ENCODE measurements at regions of chr11 and their contacts with region 1.

Region 1: DNA sequence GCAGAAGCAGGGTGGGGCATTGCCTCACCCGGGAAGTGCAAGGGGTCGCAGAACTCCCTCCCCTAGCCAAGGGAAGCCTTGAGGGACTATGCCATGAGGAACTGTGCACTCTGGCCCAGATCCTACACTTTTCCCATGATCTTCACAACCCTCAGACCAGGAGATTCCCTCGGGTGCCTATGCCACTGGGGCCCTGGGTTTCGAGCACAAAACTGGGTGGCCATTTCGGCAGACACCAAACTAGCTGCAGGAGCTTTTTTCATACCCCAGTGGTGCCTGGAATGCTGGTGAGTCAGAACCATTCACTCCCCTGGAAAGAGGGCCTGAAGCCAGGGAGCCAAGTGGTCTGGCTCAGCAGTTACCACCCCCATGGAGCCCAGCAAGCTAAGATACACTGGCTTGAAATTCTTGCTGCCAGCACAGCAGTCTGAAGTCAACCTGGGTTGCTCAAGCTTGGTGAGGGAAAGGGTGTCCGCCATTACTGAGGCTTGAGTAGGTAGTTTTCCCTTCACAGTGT is 573.7 kb upstream of the ANO3 start:
- DNase-seq: no peak
- ATAC-seq: no peak
- H3K4me3 ChIP-seq: no peak overlapping the region
- H3K27ac ChIP-seq: no peak overlapping the region
- H3K4me1 ChIP-seq: no peaks in the 10 kb centered on the region
- H3K27me3 ChIP-seq: no peaks in the 10 kb centered on the region
- CTCF ChIP-seq: no peak

Region 2: GRCh38 chr11:26070714-26071380 is 312.6 kb after region 1 on chr11:
- CTCF ChIA-PET with region 1: no interaction called
- POLR2A ChIA-PET with region 1: interaction called, 10 read pairs
- in situ Hi-C with region 1: no loop called
- intact Hi-C with region 1: no loop called
- DNase-seq: no peak
- ATAC-seq: no peak
- H3K4me3 ChIP-seq: no peak overlapping the region
- H3K27ac ChIP-seq: no peak overlapping the region
- H3K4me1 ChIP-seq: no peaks in the 10 kb centered on the region
- H3K27me3 ChIP-seq: no peaks in the 10 kb centered on the region
- CTCF ChIP-seq: no peak

Measured in Panc1 (cell line).